Panc1 (cell line): ENCODE measurements at regions of chr1 and their contacts with region 1.

Region 1: GRCh38 chr1:107965573-107965991 is 602 bp upstream of the VAV3 start:
- DNase-seq: no peak
- ATAC-seq: peak; percentile 83
- H3K4me3 ChIP-seq: peak overlapping the region in 1 of 2 experiments; percentile 30; a peak in 2 of 4 replicates
- H3K27ac ChIP-seq: no peak overlapping the region
- H3K4me1 ChIP-seq: peaks cover 2% of the 10 kb centered on the region; the same call in 1 of the 2 replicates
- H3K27me3 ChIP-seq: peaks cover 10% of the 10 kb centered on the region; the same call in 1 of the 2 replicates
- CTCF ChIP-seq: no peak

Region 2: GRCh38 chr1:107707111-107707510 is 258.5 kb before region 1 on chr1:
- CTCF ChIA-PET with region 1: no interaction called
- POLR2A ChIA-PET with region 1: no interaction called
- in situ Hi-C with region 1: no loop called
- intact Hi-C with region 1: no loop called
- DNase-seq: no peak
- ATAC-seq: no peak
- H3K4me3 ChIP-seq: no peak overlapping the region
- H3K27ac ChIP-seq: no peak overlapping the region
- H3K4me1 ChIP-seq: no peaks in the 10 kb centered on the region
- H3K27me3 ChIP-seq: no peaks in the 10 kb centered on the region
- CTCF ChIP-seq: no peak

Region 3: GRCh38 chr1:108009603-108010195 is 44.1 kb after region 1 on chr1:
- CTCF ChIA-PET with region 1: no interaction called
- POLR2A ChIA-PET with region 1: no interaction called
- in situ Hi-C with region 1: no loop called
- intact Hi-C with region 1: loop called (anchors 5 kb)
- DNase-seq: no peak
- ATAC-seq: no peak
- H3K4me3 ChIP-seq: no peak overlapping the region
- H3K27ac ChIP-seq: no peak overlapping the region
- H3K4me1 ChIP-seq: no peaks in the 10 kb centered on the region
- H3K27me3 ChIP-seq: no peaks in the 10 kb centered on the region
- CTCF ChIP-seq: no peak